ENCODE measurements at regions of chr1 and their contacts with region 1.

Region 1: GRCh38 chr1:21368515-21369289 is 71.2 kb upstream of the NBPF3 start:
- DNase-seq: peak; percentile 24
- H3K4me3 ChIP-seq: no peak overlapping the region
- H3K27me3 ChIP-seq: no peaks in the 10 kb centered on the region
- CTCF ChIP-seq: peak; percentile 100

Region 2: DNA sequence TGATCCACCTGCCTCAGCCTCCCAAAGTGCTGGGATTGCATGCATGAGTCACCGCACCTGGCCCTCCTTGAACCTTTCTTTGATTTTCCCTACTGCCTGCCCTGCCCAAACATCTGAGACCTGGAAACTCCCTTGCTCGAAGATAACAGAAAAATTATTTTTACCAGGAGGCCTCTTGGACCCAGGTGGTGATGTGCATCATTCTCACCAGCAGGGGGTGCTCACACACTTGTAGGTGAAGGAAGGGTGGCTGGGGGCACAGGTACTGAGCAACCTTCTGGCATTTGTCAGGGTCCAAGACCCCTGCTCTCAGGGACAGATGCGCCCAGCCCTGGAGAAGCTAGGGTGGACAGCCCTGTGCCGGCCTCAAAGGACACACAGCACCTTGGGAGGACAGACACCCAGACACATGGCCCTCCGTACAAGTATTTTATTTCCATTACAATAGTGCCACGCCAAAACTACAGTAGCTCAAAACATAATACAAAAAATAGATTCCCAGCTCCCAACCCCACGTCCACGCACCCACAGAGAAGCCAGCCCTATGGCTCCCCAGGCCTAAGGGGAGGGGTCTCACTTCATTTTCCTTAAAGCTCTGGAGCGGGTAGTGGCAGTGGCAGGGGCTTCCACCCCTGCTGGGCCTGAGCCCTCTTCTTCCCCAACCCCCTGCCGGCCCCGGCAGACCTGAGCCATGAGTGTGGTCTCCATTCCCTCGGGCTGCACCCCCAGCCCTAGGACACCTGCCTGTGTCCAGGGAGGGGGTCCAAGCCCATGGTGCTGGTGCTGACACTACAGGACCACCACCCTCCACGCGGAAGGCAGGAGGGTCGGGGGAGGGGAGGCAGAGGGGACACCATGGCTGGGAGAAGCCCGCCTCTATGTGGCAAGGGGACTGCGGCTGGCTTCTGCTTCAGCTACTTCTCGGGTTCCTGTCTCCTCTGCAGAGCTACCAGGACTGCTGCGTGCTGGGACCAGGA is 151.6 kb before region 1 on chr1:
- CTCF ChIA-PET with region 1: interaction called, 64 read pairs
- POLR2A ChIA-PET with region 1: no interaction called
- DNase-seq: no peak
- H3K4me3 ChIP-seq: no peak overlapping the region
- H3K27me3 ChIP-seq: no peaks in the 10 kb centered on the region
- CTCF ChIP-seq: peak; percentile 83

Region 3: DNA sequence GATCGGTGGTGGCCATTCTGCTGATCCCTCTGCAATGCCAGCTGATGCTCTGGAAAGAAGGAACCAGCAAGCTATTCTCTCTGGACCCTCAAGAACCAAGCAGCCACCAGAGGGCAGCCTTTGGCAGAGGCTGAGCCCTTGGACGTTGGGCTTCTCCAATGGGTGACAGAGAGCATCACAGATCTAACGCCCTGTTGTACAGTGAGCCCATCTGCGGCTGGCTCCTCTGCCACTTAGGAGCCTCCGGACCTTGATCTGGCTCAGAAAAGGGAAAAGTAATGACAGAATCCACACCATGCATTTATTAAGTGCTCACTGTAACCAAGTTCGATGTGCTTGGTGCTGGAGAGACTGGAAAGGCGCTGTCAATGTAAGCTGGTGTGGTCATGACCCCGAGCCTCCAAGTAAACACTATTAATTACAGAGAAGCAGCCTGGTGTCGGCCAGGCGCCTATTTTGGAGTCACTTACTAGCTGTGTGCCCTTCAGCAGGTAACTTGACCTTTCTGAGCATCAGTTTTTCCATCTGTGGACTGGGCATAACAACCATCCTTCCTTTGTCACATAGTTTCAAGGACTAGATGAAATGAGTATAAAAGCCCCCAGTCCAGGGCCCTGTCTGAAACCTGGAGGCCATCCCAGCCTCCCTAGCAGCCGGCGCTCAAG is 113.3 kb before region 1 on chr1:
- CTCF ChIA-PET with region 1: interaction called, 178 read pairs
- POLR2A ChIA-PET with region 1: no interaction called
- DNase-seq: no peak
- H3K4me3 ChIP-seq: no peak overlapping the region
- H3K27me3 ChIP-seq: no peaks in the 10 kb centered on the region
- CTCF ChIP-seq: peak; percentile 87

Region 4: GRCh38 chr1:21355956-21356355 is 12.7 kb before region 1 on chr1:
- CTCF ChIA-PET with region 1: interaction called, 15 read pairs
- POLR2A ChIA-PET with region 1: no interaction called
- DNase-seq: no peak
- H3K4me3 ChIP-seq: no peak overlapping the region
- H3K27me3 ChIP-seq: no peaks in the 10 kb centered on the region
- CTCF ChIP-seq: no peak

Region 5: GRCh38 chr1:21490774-21491553 is 122.3 kb after region 1 on chr1:
- CTCF ChIA-PET with region 1: interaction called, 113 read pairs
- POLR2A ChIA-PET with region 1: no interaction called
- DNase-seq: peak; percentile 24
- H3K4me3 ChIP-seq: no peak overlapping the region
- H3K27me3 ChIP-seq: peaks cover 5% of the 10 kb centered on the region
- CTCF ChIP-seq: peak; percentile 82

Region 6: GRCh38 chr1:21573971-21574465 is 205.3 kb after region 1 on chr1:
- CTCF ChIA-PET with region 1: interaction called, 66 read pairs
- POLR2A ChIA-PET with region 1: no interaction called
- DNase-seq: no peak
- H3K4me3 ChIP-seq: no peak overlapping the region
- H3K27me3 ChIP-seq: peaks cover 5% of the 10 kb centered on the region; the same call in 1 of the 2 replicates
- CTCF ChIP-seq: peak; percentile 65

Region 7: GRCh38 chr1:21671915-21672314 is 303.2 kb after region 1 on chr1:
- CTCF ChIA-PET with region 1: no interaction called
- POLR2A ChIA-PET with region 1: no interaction called
- DNase-seq: no peak
- H3K4me3 ChIP-seq: no peak overlapping the region
- H3K27me3 ChIP-seq: peaks cover 32% of the 10 kb centered on the region
- CTCF ChIP-seq: no peak

Measured in BJ (cell line).